Ascending aorta (tissue), 2 donors: ENCODE measurements at regions of chr9 and their contacts with region 1.

Region 1: DNA sequence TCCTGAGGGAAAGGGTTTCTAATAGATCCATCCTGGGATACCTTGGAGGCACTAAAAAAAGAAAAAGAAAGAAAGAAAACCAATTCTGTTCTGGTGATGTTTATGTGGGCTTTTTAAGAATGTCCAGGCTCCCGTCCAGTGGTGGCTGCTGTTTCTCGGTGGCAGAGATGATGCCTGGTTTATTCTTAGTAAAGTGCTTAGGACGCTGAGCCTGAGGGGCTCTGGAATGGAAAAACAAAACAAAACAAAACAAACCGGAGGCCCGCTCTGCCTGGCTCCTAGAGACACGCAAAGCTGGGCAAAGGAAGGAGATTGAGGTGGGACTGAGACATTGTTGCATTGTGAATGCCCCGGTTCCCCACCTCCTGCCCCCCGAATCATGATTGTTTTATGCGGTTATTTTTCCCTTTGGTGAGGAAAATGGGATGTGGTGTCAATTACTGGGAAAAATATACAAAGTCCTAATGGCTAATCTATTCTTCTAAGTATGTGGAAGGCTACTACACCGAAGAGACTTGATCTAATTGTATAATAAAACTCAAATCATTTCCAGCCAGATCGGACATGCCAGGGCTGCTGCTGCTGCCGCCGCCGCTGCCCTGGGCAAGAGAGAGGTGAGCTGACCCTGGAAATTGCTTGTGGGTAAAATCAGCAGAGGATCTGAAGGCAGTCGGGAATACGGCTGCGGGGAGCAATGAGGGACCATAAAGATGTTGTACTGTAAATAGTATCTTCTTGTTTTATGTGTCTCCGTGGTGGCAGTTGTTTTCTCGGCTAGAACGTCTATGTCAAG is 644.9 kb downstream of the CCDC171 start:
- DNase-seq: no peak
- H3K4me3 ChIP-seq: peak overlapping the region in 1 of 2 donors; percentile 22
- H3K27ac ChIP-seq: peak overlapping the region; percentile 35 to 73
- H3K4me1 ChIP-seq: peaks cover 0 to 24% of the 10 kb centered on the region in 2 donors
- H3K27me3 ChIP-seq: no peaks in the 10 kb centered on the region
- CTCF ChIP-seq: no peak

Region 2: GRCh38 chr9:16247188-16247875 is 49.6 kb after region 1 on chr9:
- intact Hi-C with region 1: loop called (anchors 5 kb)
- DNase-seq: no peak
- H3K4me3 ChIP-seq: no peak overlapping the region
- H3K27ac ChIP-seq: no peak overlapping the region
- H3K4me1 ChIP-seq: peaks cover 0 to 7% of the 10 kb centered on the region in 2 donors
- H3K27me3 ChIP-seq: no peaks in the 10 kb centered on the region
- CTCF ChIP-seq: no peak

Region 3: DNA sequence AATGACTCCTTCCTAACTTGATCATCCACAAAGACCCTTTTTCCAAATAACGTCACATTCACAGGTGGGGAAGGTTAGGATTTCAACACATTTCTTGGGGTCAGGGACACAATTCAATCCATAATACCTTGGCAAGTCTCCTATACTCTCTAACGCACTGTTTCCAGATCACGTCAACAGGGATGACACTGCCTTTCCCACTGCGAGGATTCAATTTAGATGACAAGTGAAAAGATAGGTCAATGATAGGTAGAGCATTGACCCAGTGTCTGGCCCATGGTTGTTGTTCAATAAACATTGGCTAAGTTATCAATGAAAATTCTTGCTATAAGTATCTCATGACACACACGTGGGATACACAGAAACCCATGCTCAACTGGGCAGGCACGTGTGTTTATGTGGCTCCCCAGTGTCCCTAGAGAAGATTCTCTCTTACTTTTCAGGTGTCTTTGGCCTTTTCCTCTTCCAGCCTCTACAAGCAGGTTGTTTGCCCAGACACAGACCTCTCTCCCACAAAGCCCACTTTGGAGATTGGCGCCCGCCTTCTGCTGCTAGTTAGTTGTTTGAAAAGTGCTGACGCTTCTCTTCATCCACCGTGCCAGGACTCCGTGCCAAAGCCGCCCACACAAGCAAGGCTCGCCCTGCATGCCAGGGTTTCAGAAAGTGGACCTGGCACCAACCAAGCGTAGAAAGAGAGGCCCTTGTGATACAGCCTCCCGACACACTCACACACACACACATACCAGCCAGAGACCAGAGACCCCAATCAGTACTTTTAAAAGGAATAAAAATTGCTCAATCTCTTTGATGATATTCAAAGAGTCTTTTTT is 78.2 kb after region 1 on chr9:
- intact Hi-C with region 1: loop called (anchors 5 kb)
- DNase-seq: peak in 1 of 2 donors; percentile 79
- H3K4me3 ChIP-seq: no peak overlapping the region
- H3K27ac ChIP-seq: no peak overlapping the region
- H3K4me1 ChIP-seq: peaks cover 0 to 11% of the 10 kb centered on the region in 2 donors
- H3K27me3 ChIP-seq: no peaks in the 10 kb centered on the region
- CTCF ChIP-seq: no peak

Region 4: DNA sequence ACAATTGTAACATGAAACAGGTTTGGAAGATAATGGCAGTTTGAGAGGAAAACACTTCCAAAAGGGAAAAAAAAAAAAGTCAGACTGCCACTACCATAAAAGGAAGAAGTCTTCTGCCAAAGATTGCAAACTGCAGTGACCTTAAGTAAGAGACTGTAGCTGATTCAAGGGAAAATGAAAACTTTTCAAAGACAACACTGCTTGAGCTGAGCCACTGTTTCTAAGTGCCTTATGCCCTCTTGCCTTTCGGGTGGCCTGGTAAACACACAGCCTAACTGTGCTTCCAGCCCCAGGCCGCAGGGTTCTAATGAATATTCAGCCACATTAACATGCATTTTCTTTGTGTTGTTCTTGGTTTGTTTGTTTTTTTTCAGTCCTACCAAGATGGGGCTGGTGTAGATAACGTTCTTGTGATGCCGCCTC is 318.1 kb after region 1 on chr9:
- intact Hi-C with region 1: loop called (anchors 5 kb)
- DNase-seq: no peak
- H3K4me3 ChIP-seq: peak overlapping the region in 1 of 2 donors; percentile 42
- H3K27ac ChIP-seq: peak overlapping the region; percentile 47 to 51
- H3K4me1 ChIP-seq: peaks cover 0 to 20% of the 10 kb centered on the region in 2 donors
- H3K27me3 ChIP-seq: no peaks in the 10 kb centered on the region
- CTCF ChIP-seq: no peak

Region 5: GRCh38 chr9:16705121-16705604 is 507.4 kb after region 1 on chr9:
- intact Hi-C with region 1: loop called (anchors 5 kb)
- DNase-seq: peak; percentile 56 to 97
- H3K4me3 ChIP-seq: peak overlapping the region in 1 of 2 donors; percentile 64
- H3K27ac ChIP-seq: peak overlapping the region; percentile 85 to 94
- H3K4me1 ChIP-seq: peaks cover 0 to 35% of the 10 kb centered on the region in 2 donors
- H3K27me3 ChIP-seq: no peaks in the 10 kb centered on the region
- CTCF ChIP-seq: no peak

Region 6: DNA sequence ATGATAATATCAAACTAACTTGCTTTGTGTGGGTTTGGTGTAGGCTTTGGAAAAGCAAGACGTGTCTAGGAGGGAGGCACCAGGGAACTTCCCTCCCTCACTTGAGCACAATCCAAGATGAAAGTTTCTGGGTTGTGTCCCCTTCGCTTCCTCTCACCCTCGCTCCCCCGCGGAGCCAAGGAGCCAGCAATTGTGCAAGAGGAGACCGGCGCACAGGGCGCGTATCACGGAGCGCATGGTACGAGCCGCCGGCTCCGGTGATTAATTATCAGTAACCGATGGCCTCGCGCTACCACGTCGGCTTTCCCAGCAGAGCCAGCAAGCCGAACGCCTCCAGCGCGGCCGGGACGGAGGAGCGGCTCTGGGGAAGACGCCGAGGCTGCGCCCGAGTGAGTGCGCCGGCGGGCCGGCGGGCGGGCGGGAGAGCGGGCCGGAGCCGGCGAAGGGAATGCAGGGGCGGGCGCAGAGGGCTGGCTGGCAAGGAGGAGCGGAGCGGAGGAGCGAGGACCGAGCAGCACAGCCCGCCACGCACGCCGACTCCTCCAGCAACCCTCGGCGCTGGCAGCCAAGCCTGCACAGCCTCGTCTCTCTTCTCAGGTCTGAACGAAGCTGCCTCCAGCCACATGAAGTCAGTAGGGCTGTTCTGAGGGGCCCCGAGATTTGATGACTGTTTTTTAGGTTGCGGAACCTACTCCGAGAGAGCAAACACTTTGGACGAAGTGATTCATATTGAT is 529.1 kb after region 1 on chr9:
- intact Hi-C with region 1: loop called (anchors 5 kb)
- DNase-seq: peak in 1 of 2 donors; percentile 91
- H3K4me3 ChIP-seq: peak overlapping the region; percentile 69 to 76
- H3K27ac ChIP-seq: peak overlapping the region; percentile 92 to 95
- H3K4me1 ChIP-seq: peaks cover 0 to 2% of the 10 kb centered on the region in 2 donors
- H3K27me3 ChIP-seq: no peaks in the 10 kb centered on the region
- CTCF ChIP-seq: no peak